Psoas muscle (tissue), 8 donors: ENCODE measurements at regions of chr17 and their contacts with region 1.

Region 1: GRCh38 chr17:74379495-74380085 is 12.3 kb downstream of the GPR142 start:
- DNase-seq: peak; percentile 93 to 97
- ATAC-seq: peak; percentile 89 to 94 (median 91)
- H3K4me3 ChIP-seq: peak overlapping the region; percentile 48
- H3K27ac ChIP-seq: peak overlapping the region; percentile 84
- H3K4me1 ChIP-seq: peaks cover 24% of the 10 kb centered on the region
- H3K27me3 ChIP-seq: no peaks in the 10 kb centered on the region
- CTCF ChIP-seq: peak; percentile 97

Region 2: GRCh38 chr17:73710095-73710592 is 669.4 kb before region 1 on chr17:
- intact Hi-C with region 1: no loop called
- DNase-seq: peak in 1 of 2 donors; percentile 29
- ATAC-seq: peak; percentile 62 to 73 (median 68)
- H3K4me3 ChIP-seq: no peak overlapping the region
- H3K27ac ChIP-seq: no peak overlapping the region
- H3K4me1 ChIP-seq: no peaks in the 10 kb centered on the region
- H3K27me3 ChIP-seq: peaks cover 0 to 6% (median 0%) of the 10 kb centered on the region in 3 donors
- CTCF ChIP-seq: peak; percentile 68

Region 3: GRCh38 chr17:74430706-74431567 is 51.3 kb after region 1 on chr17:
- intact Hi-C with region 1: loop called in 1 of 2 experiments (anchors 2 kb)
- DNase-seq: peak; percentile 93 to 97
- ATAC-seq: peak; percentile 75 to 82 (median 78)
- H3K4me3 ChIP-seq: peak overlapping the region; percentile 90
- H3K27ac ChIP-seq: peak overlapping the region; percentile 98
- H3K4me1 ChIP-seq: peaks cover 42% of the 10 kb centered on the region
- H3K27me3 ChIP-seq: peaks cover 0 to 2% (median 0%) of the 10 kb centered on the region in 3 donors
- CTCF ChIP-seq: no peak

Region 4: DNA sequence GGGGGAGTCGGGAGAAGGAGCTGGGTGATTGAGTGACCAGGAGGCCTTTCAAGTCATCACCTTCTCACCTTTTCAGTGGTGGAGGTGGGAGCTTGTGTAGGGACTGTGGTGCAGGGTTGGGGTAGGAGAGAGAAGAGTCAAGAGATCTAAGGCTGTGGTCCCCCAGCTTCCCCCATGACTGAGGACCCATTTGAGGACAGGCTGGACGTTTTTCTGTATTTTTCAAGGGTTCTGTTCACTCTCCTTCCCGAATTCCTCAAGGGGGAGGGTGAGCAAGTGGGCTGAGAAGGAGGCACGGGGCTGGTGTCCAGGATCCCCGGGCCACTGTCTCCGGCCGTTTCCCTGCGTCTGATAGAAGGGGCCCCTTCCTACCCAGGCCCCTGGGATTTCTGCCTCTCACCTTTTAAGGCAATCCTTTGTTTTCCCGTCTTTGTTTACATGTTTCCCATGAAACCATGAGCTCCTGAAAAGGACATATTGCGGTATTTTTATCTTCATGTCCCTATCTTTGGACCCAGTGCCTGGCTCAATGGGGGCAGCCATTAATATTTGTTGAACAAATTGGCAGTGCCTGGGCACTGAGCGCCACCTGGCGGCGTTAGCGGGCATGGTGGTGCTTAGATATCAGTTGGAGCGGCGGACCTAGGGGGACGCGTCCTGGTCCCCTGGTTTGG is 77.7 kb after region 1 on chr17:
- intact Hi-C with region 1: loop called (anchors 1 kb)
- DNase-seq: peak; percentile 83 to 91
- ATAC-seq: peak; percentile 43 to 62 (median 50)
- H3K4me3 ChIP-seq: peak overlapping the region; percentile 34
- H3K27ac ChIP-seq: peak overlapping the region; percentile 63
- H3K4me1 ChIP-seq: peaks cover 32% of the 10 kb centered on the region
- H3K27me3 ChIP-seq: no peaks in the 10 kb centered on the region
- CTCF ChIP-seq: peak; percentile 93